Mammary epithelial cell (primary cell): ENCODE measurements at regions of chr21 and their contacts with region 1.

Region 1: DNA sequence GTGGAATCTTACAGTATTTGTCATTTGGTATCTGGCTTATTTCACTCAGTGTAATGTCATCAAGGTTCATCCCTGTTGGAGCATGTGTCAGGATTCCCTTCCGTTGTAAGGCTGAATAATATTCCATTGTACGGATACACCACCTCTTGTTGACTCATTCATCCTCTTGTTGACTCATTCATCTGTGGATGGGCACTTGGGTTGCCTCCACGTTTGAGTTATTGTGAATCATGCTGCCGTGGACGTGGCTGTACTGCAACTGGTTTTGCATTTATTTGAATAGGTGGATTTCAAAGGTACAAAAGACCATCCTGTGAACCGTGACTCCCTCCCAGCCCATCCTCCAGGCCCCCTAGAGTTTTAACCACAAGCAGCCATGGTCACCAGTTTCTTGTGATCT is 11.9 kb upstream of the TCP10L start:
- DNase-seq: peak; percentile 97
- H3K4me3 ChIP-seq: no peak overlapping the region
- H3K27ac ChIP-seq: peak overlapping the region; percentile 84
- H3K4me1 ChIP-seq: peaks cover 29% of the 10 kb centered on the region
- H3K27me3 ChIP-seq: no peaks in the 10 kb centered on the region
- CTCF ChIP-seq: no peak

Region 2: GRCh38 chr21:31866077-31866511 is 731.1 kb before region 1 on chr21:
- CTCF ChIA-PET with region 1: no interaction called
- dilution Hi-C with region 1: no loop called
- in situ Hi-C with region 1: no loop called
- intact Hi-C with region 1: loop called (anchors 1 kb)
- DNase-seq: peak; percentile 53
- H3K4me3 ChIP-seq: no peak overlapping the region
- H3K27ac ChIP-seq: no peak overlapping the region
- H3K4me1 ChIP-seq: no peaks in the 10 kb centered on the region
- H3K27me3 ChIP-seq: no peaks in the 10 kb centered on the region
- CTCF ChIP-seq: peak; percentile 56 to 75

Region 3: DNA sequence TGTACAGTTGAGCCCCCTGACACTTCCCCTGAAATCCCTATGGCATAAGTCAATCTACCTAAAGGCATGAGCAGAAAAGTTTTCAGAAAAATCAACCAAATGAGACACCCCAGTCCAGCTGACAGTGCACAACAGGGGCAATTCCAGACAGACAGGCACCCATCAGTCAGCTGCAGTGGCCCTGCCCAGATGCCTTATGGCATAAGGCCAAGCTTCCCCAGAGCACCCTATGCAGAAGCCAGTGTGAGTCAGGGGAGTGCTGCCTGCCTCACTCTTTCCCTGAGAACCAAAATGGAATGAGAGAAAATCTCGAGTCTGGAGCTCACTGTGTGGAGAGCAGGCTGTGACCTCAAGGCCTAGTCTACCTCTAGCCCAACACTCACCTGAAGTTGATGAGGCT is 260.5 kb before region 1 on chr21:
- CTCF ChIA-PET with region 1: interaction called, 22 read pairs
- dilution Hi-C with region 1: no loop called
- in situ Hi-C with region 1: no loop called
- intact Hi-C with region 1: no loop called
- DNase-seq: peak; percentile 32
- H3K4me3 ChIP-seq: no peak overlapping the region
- H3K27ac ChIP-seq: no peak overlapping the region
- H3K4me1 ChIP-seq: no peaks in the 10 kb centered on the region
- H3K27me3 ChIP-seq: no peaks in the 10 kb centered on the region
- CTCF ChIP-seq: no peak

Region 4: GRCh38 chr21:32386195-32386870 is 210.9 kb before region 1 on chr21:
- CTCF ChIA-PET with region 1: interaction called, 8 read pairs
- dilution Hi-C with region 1: no loop called
- in situ Hi-C with region 1: no loop called
- intact Hi-C with region 1: loop called (anchors 1 kb)
- DNase-seq: peak; percentile 85
- H3K4me3 ChIP-seq: no peak overlapping the region
- H3K27ac ChIP-seq: peak overlapping the region; percentile 28
- H3K4me1 ChIP-seq: peaks cover 37% of the 10 kb centered on the region
- H3K27me3 ChIP-seq: no peaks in the 10 kb centered on the region
- CTCF ChIP-seq: no peak

Region 5: DNA sequence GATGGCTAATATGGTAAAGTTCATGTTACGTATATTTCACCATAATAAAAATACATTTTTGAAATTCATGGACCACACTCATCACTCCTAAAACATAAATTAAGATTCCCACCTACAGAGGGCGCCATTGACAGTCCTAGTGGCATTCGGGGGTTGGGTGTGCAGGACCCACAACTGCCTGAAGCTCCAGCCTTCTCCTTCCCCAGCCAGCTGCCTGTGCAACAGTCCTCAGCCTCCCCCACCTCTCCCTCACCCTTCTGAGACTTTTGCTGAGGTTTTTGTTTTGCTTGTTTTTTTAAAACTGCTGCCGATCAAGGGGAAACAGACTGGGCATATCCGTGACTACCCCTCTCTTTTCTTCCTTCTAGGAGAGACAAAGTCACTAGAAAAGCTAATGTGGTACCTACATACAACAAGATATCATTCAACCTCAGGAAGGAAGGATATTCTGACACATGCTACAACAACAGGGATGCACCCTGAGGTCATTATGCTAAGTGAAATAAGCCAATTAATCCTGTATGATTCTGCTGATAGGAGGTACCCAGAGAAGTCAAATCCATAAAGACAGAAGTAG is 193.9 kb before region 1 on chr21:
- CTCF ChIA-PET with region 1: interaction called, 52 read pairs
- dilution Hi-C with region 1: no loop called
- in situ Hi-C with region 1: loop called in 1 of 2 experiments (anchors 5 kb)
- intact Hi-C with region 1: loop called (anchors 1 kb)
- DNase-seq: peak; percentile 47
- H3K4me3 ChIP-seq: no peak overlapping the region
- H3K27ac ChIP-seq: no peak overlapping the region
- H3K4me1 ChIP-seq: no peaks in the 10 kb centered on the region
- H3K27me3 ChIP-seq: no peaks in the 10 kb centered on the region
- CTCF ChIP-seq: peak; percentile 69 to 71

Region 6: GRCh38 chr21:32569261-32570230 is 27.7 kb before region 1 on chr21:
- CTCF ChIA-PET with region 1: interaction called, 4 read pairs
- dilution Hi-C with region 1: no loop called
- in situ Hi-C with region 1: no loop called
- intact Hi-C with region 1: loop called (anchors 2 kb)
- DNase-seq: peak; percentile 78
- H3K4me3 ChIP-seq: peak overlapping the region; percentile 44 to 63 (median 56)
- H3K27ac ChIP-seq: no peak overlapping the region
- H3K4me1 ChIP-seq: peaks cover 22% of the 10 kb centered on the region
- H3K27me3 ChIP-seq: no peaks in the 10 kb centered on the region
- CTCF ChIP-seq: peak; percentile 89 to 92